Activated T-helper 2 cell treated with anti-CD3 and anti-CD28 coated beads, Interferon-gamma antibody, Interleukin-2, Interleukin-4, amounts not matched to agents 10 μg/mL and 5 μg/mL and 100 μg/mL, durations not matched to agents 14 hours and 24 hours and 36 hours (primary cell): ENCODE measurements at regions of chr2 and their contacts with region 1.

Region 1: DNA sequence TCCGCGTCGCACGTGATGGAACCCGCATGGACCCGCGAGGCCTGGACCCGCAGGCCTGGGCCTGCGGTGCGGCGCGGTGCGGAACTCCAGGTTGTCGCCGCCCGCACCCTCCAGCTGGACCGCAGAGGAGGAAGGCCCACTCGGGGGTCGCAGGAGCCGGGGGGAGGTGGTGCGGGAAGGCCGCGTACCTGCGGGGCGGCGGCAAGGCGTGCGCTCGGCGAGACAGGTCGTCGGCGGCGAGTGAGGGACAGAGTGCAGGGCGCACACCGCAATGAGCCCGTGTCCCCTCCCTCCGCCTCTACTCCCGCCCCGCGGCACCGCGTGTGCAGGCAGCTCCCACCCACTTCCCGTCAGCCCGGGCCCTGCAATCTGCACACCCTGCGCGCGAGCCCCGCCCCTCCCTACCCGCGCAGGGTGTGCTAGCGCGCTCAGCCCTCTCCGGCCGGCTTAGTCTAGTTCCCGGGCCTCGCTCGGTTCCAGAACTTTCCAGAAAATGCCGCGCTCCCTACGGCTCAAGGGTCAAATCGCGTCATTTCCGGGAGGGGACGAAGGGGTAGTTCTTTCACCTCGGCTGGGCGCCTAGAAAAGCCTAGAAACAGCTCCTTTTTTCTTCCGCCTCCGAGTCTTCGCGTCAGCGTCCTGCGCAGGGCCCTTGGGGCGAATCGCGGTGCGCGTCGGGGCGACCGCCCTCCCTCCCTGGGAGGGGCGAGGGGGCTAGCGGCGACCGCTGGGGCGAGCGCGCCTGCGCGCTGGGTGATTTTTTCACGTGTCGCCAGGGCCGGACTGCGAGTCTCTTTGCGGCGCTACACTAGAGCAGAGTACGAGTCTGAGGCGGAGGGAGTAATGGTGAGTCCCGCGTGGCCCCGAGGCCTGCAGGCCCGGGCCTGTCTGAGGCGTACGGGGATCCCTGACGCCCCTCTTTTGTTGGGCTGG is at the starts of genes HSPD1 and HSPE1:
- DNase-seq: peak; percentile 99
- H3K4me3 Mint-ChIP-seq: peak within 1 kb of the TSS; percentile 94
- H3K27ac Mint-ChIP-seq: peak within 1 kb of the TSS; percentile 97
- H3K4me1 Mint-ChIP-seq: peaks cover 41% of the 10 kb centered on the region
- H3K27me3 Mint-ChIP-seq: no peaks in the 10 kb centered on the region
- total RNA-seq, gene HSPD1: 749 and 761 TPM in 2 replicates
- total RNA-seq, gene HSPE1: 301 and 309 TPM in 2 replicates

Region 2: DNA sequence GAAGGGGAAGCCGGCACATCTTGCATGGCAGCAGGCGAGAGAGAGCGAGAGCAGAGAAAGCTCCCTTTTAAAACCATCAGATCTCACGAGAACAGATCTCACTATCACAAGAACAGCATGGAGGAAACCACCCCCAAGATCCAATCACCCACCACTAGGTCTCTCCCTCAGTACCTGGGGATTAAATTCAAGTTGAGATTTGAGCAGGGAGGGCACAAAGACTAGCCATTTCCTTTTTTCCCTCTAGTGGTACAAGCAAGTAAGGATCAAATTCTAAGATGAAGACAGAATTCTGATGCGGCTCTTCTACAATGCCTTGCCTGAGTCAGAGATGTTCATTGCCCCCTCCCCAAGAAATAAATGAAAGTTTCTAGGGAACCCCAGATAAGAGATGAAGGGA is 143.7 kb before region 1 on chr2:
- intact Hi-C with region 1: no loop called
- DNase-seq: no peak
- H3K4me3 Mint-ChIP-seq: peak overlapping the region; percentile 3
- H3K27ac Mint-ChIP-seq: peak overlapping the region; percentile 11
- H3K4me1 Mint-ChIP-seq: peaks cover 24% of the 10 kb centered on the region
- H3K27me3 Mint-ChIP-seq: no peaks in the 10 kb centered on the region

Region 3: GRCh38 chr2:197453161-197453914 is 46.5 kb before region 1 on chr2 and contains the start of gene COQ10B:
- intact Hi-C with region 1: loop called (anchors 1 kb)
- DNase-seq: peak; percentile 99
- H3K4me3 Mint-ChIP-seq: peak within 1 kb of the TSS; percentile 99
- H3K27ac Mint-ChIP-seq: peak within 1 kb of the TSS; percentile 100
- H3K4me1 Mint-ChIP-seq: peaks cover 26% of the 10 kb centered on the region
- H3K27me3 Mint-ChIP-seq: no peaks in the 10 kb centered on the region
- total RNA-seq, gene COQ10B: 19.9 and 20.8 TPM in 2 replicates